Tibial artery (tissue), 4 donors: ENCODE measurements at regions of chr19 and their contacts with region 1.

Region 1: GRCh38 chr19:9584073-9584833 is at the start of gene ZNF121:
- DNase-seq: peak; percentile 75 to 89
- H3K4me3 ChIP-seq: peak within 1 kb of the TSS; percentile 72 to 96
- H3K27ac ChIP-seq: peak within 1 kb of the TSS; percentile 84 to 94
- H3K4me1 ChIP-seq: peaks cover 0 to 23% (median 11%) of the 10 kb centered on the region in 4 donors
- H3K27me3 ChIP-seq: peaks cover 0 to 2% of the 10 kb centered on the region in 2 donors
- CTCF ChIP-seq: peak in 1 of 2 experiments; percentile 4

Region 2: GRCh38 chr19:9329999-9330398 is 254.3 kb before region 1 on chr19:
- intact Hi-C with region 1: loop called (anchors 5 kb)
- DNase-seq: no peak
- H3K4me3 ChIP-seq: no peak overlapping the region
- H3K27ac ChIP-seq: no peak overlapping the region
- H3K4me1 ChIP-seq: peaks cover 0 to 5% (median under 1%) of the 10 kb centered on the region in 4 donors
- H3K27me3 ChIP-seq: no peaks in the 10 kb centered on the region
- CTCF ChIP-seq: no peak

Region 3: DNA sequence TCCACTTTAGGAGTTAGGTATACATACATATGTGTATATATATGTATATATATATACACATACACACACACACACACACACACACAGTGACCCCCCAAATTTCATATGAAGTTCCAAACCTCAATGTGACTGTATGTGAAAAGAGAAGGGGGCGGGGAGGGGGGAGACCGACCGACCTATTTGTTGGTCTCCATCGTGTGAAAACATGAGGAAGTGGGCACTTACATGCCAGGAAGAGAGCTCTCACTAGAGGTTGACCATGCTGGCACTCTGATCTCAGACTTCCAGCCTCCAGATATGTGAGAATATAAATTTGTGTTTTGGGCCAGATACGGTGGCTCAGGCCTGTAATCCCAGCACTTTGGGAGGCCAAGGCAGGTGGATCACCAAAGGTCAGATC is 66.1 kb after region 1 on chr19:
- intact Hi-C with region 1: no loop called
- DNase-seq: no peak
- H3K4me3 ChIP-seq: no peak overlapping the region
- H3K27ac ChIP-seq: no peak overlapping the region
- H3K4me1 ChIP-seq: no peaks in the 10 kb centered on the region
- H3K27me3 ChIP-seq: no peaks in the 10 kb centered on the region
- CTCF ChIP-seq: no peak

Region 4: GRCh38 chr19:9785367-9786331 is 201.4 kb after region 1 on chr19:
- intact Hi-C with region 1: loop called (anchors 10 kb)
- DNase-seq: peak; percentile 99
- H3K4me3 ChIP-seq: peak overlapping the region; percentile 91 to 92
- H3K27ac ChIP-seq: peak overlapping the region; percentile 96 to 99
- H3K4me1 ChIP-seq: peaks cover 0 to 18% (median 8%) of the 10 kb centered on the region in 4 donors
- H3K27me3 ChIP-seq: no peaks in the 10 kb centered on the region
- CTCF ChIP-seq: no peak